MCF 10A (cell line): ENCODE measurements at regions of chr19 and their contacts with region 1.

Region 1: DNA sequence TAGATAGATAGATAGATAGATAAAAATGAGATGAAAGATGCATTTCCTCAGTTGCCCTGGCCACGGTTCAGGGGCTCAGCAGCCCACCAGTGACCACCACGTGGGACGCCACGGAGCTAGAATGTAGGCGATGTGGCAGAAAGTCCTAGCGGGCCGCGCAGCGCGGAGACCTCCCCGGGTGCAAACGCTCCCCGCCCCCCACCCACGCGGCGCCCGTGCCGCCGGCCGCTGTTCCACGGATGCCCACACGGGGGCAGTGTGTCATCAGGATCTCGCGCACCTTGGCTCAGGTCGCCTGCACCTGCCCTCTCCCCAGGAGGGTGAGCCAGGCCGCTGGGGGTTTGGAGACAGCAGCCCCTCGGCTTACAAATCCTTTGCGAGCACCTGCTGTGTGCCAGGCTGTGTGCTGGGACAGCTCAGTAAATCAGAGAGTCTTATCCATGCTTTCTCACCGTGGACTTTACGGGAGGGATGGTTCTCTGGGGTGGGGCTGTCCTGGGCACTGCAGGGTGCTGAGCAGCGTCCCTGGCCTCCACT is 13.7 kb upstream of the TLE5 start:
- DNase-seq: peak; percentile 56
- H3K4me3 Mint-ChIP-seq: no peak overlapping the region
- H3K27ac Mint-ChIP-seq: no peak overlapping the region
- H3K4me1 Mint-ChIP-seq: no peaks in the 10 kb centered on the region
- H3K27me3 Mint-ChIP-seq: no peaks in the 10 kb centered on the region
- CTCF ChIP-seq: peak; percentile 87

Region 2: DNA sequence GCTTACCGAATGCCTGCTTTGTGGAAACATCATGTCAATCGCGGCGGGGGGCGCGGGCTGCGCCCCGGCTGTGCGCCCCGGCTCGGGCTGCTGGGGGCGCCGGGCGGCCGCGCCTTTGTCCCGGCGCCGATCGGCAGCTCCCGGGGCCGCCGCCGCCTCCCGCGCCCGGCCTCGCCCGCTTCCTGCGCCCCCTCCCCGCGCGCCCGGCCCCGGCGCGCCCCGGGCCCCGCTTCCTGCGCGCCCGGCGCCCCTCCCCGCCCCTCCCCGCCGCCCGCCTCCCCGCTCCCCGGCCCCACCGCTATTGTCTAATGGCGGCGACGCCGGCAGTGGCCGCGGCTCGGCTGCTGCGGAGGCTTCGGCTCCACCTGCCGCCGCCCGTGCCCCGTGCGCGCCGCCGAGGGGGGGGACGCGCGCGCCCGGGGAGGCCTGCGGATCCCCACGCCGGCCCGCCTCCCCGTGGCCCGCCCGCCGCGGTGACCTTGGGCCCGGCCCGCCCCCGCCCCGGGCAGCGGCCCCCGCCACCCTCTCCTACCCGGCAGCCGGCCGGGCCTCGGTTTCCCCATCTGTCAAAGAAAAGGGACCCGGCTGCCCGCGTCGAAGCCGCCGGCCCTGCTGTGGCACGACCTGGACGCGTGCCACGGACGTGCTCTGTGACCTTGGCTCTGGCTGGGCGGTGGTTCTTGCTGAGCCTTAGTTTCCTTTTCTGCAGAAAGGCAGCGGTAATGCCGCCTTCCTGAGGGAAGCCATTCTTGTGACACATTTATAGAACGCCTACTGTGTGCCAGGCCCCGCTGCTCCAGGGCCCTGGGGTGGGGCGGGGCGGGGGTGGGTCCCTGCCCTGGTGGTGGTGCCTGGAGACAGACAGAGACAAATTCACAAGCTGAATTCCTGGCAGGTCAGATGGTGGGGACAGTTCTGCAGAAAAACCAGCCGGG is 13.5 kb before region 1 on chr19 and contains the start of gene TLE5:
- CTCF ChIA-PET with region 1: interaction called, 16 read pairs
- POLR2A ChIA-PET with region 1: no interaction called
- intact Hi-C with region 1: no loop called
- DNase-seq: peak; percentile 55
- H3K4me3 Mint-ChIP-seq: peak within 1 kb of the TSS; percentile 71
- H3K27ac Mint-ChIP-seq: peak within 1 kb of the TSS; percentile 78
- H3K4me1 Mint-ChIP-seq: peaks cover 9% of the 10 kb centered on the region
- H3K27me3 Mint-ChIP-seq: no peaks in the 10 kb centered on the region
- CTCF ChIP-seq: no peak
- total RNA-seq, gene TLE5: 266 and 273 TPM in 2 replicates

Region 3: DNA sequence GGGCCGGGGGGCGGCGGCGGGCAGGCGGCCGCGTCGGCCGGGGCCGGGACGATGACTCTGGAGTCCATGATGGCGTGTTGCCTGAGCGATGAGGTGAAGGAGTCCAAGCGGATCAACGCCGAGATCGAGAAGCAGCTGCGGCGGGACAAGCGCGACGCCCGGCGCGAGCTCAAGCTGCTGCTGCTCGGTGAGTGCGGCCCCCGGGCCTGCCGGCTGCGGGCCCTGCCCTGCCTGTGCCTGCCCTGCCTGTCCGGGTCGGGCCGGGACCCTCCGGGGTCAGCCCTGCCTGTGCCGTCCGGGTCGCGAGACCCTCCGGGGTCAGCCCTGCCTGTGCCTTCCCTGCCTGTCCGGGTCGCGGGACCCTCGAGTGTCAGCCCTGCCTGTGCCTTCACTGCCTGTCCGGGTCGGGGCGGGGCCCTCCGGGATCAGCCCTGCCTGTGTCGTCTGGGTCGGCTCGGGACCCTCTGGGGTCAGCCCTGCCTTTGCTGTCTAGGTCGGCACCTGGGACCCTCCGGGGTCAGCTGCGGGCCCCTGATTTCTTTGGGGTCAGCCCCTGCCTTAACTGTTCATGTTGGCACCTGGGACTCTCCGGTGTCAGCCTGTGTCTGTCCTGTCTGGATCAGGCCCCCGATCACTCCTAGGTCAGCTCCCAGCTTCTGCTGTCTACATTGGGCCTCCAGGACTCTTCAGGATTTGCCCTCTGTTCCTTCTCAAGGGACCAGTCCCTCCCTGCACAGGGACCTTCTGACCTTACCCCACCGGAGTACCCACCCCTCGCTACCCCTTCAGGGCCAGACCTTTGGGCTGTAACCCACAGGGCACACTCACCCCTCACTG is 18.9 kb after region 1 on chr19:
- CTCF ChIA-PET with region 1: interaction called, 11 read pairs
- POLR2A ChIA-PET with region 1: interaction called, 3 read pairs
- intact Hi-C with region 1: no loop called
- DNase-seq: peak; percentile 25
- H3K4me3 Mint-ChIP-seq: peak overlapping the region; percentile 93
- H3K27ac Mint-ChIP-seq: peak overlapping the region; percentile 88
- H3K4me1 Mint-ChIP-seq: peaks cover 24% of the 10 kb centered on the region
- H3K27me3 Mint-ChIP-seq: no peaks in the 10 kb centered on the region
- CTCF ChIP-seq: no peak

Region 4: DNA sequence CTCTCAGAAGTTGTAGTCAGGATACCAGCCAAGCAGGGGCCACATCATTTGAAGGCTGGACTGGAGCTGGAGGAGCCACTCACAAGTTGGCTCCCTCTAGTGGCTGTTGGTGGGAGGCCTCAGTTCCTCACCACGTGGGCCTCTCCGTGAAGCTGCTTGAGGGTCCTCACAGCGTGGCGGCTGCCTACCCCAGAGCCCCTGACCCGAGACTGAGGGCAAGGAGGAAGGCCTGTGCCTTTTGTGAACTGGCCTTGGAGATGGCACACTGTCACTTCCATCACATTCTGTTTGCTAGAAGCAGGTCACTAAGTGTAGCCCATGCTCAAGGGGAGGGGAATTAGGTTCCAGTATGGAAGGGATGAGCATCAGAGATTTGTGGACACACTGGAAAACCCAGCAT is 32.8 kb after region 1 on chr19:
- CTCF ChIA-PET with region 1: interaction called, 32 read pairs
- POLR2A ChIA-PET with region 1: no interaction called
- intact Hi-C with region 1: no loop called
- DNase-seq: peak; percentile 67
- H3K4me3 Mint-ChIP-seq: no peak overlapping the region
- H3K27ac Mint-ChIP-seq: peak overlapping the region; percentile 53
- H3K4me1 Mint-ChIP-seq: peaks cover 6% of the 10 kb centered on the region
- H3K27me3 Mint-ChIP-seq: no peaks in the 10 kb centered on the region
- CTCF ChIP-seq: peak; percentile 92

Region 5: GRCh38 chr19:3125900-3126524 is 50.0 kb after region 1 on chr19:
- CTCF ChIA-PET with region 1: interaction called, 21 read pairs
- POLR2A ChIA-PET with region 1: interaction called, 3 read pairs
- intact Hi-C with region 1: no loop called
- DNase-seq: peak; percentile 41
- H3K4me3 Mint-ChIP-seq: no peak overlapping the region
- H3K27ac Mint-ChIP-seq: no peak overlapping the region
- H3K4me1 Mint-ChIP-seq: no peaks in the 10 kb centered on the region
- H3K27me3 Mint-ChIP-seq: no peaks in the 10 kb centered on the region
- CTCF ChIP-seq: peak; percentile 63

Region 6: DNA sequence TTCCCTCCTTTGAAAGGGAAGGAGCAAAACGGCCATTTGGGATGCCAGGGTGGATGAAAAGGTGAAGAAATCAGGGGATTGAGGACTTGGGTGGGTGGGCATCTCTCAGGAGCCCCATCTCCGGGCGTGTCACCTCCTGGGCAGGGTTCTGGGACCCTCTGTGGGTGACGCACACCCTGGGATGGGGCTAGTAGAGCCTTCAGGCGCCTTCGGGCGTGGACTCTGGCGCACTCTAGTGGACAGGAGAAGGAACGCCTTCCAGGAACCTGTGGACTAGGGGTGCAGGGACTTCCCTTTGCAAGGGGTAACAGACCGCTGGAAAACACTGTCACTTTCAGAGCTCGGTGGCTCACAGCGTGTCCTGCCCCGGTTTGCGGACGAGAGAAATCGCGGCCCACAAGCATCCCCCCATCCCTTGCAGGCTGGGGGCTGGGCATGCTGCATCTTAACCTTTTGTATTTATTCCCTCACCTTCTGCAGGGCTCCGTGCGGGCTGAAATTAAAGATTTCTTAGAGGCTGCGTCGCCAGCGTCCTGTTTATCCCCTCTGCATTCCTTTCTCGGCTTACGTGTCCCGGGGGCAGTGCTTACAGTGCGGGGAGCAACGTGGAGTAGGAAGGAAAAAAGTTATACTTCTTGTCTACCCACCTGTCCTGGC is 87.4 kb after region 1 on chr19:
- CTCF ChIA-PET with region 1: interaction called, 11 read pairs
- POLR2A ChIA-PET with region 1: no interaction called
- intact Hi-C with region 1: loop called (anchors 1 kb)
- DNase-seq: peak; percentile 66
- H3K4me3 Mint-ChIP-seq: no peak overlapping the region
- H3K27ac Mint-ChIP-seq: no peak overlapping the region
- H3K4me1 Mint-ChIP-seq: peaks cover 5% of the 10 kb centered on the region
- H3K27me3 Mint-ChIP-seq: no peaks in the 10 kb centered on the region
- CTCF ChIP-seq: peak; percentile 93

Region 7: DNA sequence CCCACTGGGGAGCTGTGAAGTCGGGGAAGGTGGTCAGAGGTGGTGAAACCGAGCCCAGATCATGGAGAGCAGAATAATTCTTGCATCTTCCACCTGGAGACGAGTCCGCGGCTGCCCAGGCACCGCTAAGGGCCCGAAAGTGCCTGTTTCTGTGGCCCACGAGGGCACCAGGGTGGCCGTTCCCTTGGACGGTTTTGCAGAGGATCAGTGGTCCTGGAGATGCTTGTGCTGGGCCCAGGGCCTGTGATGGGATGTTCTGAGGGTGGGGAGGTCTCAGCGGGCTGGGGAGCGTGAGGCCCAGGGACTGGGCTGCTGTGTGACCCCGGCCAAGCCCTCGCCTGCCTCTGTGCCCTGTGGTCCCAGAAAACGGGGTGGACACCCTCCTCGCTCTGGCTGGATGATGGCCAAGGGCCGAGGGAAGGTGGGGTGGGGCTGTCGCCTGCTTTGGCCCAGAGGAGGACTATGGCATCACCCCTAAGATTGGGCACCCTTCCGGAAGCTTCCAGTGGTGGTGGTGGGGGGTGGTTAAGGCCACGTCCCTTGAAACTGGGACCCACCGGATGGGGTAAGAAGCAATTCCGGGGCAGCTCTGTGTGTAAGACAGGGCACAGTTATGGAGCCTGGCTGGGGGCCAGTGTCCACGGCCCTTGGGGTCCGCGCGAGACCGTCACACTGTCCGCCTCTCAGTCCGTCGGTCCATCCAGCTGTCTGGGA is 239.2 kb after region 1 on chr19:
- CTCF ChIA-PET with region 1: no interaction called
- POLR2A ChIA-PET with region 1: no interaction called
- intact Hi-C with region 1: no loop called
- DNase-seq: no peak
- H3K4me3 Mint-ChIP-seq: no peak overlapping the region
- H3K27ac Mint-ChIP-seq: no peak overlapping the region
- H3K4me1 Mint-ChIP-seq: peaks cover 5% of the 10 kb centered on the region
- H3K27me3 Mint-ChIP-seq: peaks cover 47% of the 10 kb centered on the region
- CTCF ChIP-seq: no peak

Region 8: DNA sequence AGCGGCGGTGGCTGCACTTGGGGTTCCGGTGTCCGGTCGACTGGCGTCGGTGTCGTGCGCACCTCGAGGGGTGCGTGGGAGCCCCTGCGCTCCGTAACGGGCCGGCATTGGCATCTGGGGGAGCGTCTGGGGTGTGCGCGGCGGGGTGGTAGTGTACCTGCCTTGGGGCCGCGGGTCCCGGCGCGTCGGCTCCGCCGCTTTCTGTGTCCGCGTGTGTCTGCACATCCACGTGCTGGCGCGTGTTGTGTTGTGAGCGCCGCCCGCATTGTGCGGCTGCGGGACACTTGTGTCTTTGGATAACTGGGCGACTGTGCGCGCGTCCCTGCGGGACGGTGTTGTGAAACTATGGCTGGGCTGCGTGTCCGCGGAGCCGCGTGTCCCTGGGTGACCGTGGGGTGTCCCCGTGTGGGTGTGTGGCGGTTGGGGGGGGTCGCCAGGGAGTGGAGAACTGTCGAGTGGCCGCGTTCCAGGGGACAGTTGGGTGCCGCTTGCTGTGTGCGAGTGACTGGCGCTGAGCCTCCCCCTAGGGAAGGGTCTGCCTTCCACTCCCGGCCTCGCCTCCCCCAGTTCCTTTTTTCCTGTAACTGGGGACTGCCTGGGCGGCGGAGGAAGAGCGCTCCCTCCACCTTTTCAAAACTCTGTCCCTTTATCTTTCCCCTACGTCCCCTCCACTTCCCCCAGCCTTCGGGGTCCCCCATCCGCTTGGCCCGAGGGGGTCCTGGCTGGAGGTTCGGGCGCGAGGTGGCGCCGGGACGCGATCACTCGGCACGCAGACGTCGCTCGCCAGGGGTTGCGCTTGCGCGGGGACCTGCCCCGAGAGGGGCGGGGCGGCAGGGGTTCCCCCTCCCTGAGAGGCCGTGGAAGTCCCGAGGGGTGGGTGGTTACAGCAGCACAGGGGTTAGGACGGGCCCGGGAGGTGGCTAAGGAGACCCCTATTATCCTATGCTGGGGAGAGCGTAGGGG is 284.7 kb after region 1 on chr19:
- CTCF ChIA-PET with region 1: no interaction called
- POLR2A ChIA-PET with region 1: no interaction called
- intact Hi-C with region 1: no loop called
- DNase-seq: peak; percentile 53
- H3K4me3 Mint-ChIP-seq: peak overlapping the region; percentile 81
- H3K27ac Mint-ChIP-seq: no peak overlapping the region
- H3K4me1 Mint-ChIP-seq: peaks cover 42% of the 10 kb centered on the region
- H3K27me3 Mint-ChIP-seq: no peaks in the 10 kb centered on the region
- CTCF ChIP-seq: no peak